ENCODE measurements at regions of chr3 and their contacts with region 1.

Region 1: GRCh38 chr3:47130557-47130956 is 33.4 kb downstream of the SETD2 start:
- DNase-seq: no peak
- H3K4me3 ChIP-seq: no peak overlapping the region
- H3K27ac ChIP-seq: no peak overlapping the region
- H3K4me1 ChIP-seq: peaks cover 5% of the 10 kb centered on the region
- H3K27me3 ChIP-seq: no peaks in the 10 kb centered on the region
- CTCF ChIP-seq: no peak
- POLR2A ChIP-seq: no peak

Region 2: DNA sequence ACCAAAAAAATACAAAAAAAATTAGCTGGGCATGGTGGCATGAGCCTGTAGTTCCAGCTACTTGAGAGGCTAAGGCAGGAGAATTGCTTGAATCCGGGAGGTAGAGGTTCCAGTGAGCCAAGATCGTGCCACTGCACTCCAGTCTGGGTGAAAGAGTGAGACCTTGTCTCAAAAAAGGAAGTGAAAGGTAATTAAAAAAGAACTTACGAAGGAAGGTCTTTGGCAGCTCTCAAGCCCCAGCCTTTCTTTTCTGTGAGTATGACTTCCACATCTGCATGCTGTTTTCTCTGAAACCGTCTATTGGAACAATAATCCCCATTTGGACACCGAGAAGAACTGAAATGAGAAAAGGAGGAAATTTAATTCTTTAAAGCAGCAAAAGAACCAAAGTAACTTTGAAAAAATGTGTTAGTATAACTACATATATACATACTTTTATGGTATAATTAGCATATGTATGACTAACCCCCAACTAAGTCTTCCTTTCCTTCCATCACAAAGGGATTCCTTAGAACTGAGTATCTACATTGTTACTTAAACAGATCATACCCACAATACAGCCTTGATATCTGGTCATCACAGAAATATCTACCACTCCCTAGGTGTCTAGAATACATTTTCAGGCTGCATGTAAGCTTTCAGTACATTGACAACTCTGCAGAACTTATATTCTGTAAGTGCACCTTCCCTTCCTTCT is 16.7 kb before region 1 on chr3:
- CTCF ChIA-PET with region 1: interaction called, 8 read pairs
- POLR2A ChIA-PET with region 1: no interaction called
- dilution Hi-C with region 1: no loop called
- intact Hi-C with region 1: loop called (anchors 2 kb)
- DNase-seq: no peak
- H3K4me3 ChIP-seq: no peak overlapping the region
- H3K27ac ChIP-seq: no peak overlapping the region
- H3K4me1 ChIP-seq: peaks cover 7% of the 10 kb centered on the region
- H3K27me3 ChIP-seq: no peaks in the 10 kb centered on the region
- CTCF ChIP-seq: no peak
- POLR2A ChIP-seq: no peak

Region 3: DNA sequence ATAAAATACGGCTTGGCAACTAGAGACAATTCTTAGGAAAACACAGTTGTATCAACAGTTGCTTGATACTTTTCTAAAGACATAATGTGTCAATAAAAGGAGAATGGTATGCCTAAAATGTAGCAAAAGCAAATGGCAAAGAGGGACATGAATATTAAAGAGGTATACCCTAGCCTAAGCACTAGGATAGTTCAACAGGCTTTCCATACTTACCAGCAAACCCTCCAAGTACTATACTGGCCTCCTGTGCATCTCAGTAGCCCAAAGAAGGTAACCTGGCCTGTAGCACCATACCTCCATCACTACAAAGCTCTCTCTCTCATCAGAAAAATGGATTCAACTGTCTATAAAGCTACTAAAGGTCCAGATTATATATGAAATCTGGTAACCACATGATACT is 25.8 kb after region 1 on chr3:
- CTCF ChIA-PET with region 1: no interaction called
- POLR2A ChIA-PET with region 1: no interaction called
- dilution Hi-C with region 1: no loop called
- intact Hi-C with region 1: no loop called
- DNase-seq: no peak
- H3K4me3 ChIP-seq: no peak overlapping the region
- H3K27ac ChIP-seq: no peak overlapping the region
- H3K4me1 ChIP-seq: peaks cover 4% of the 10 kb centered on the region
- H3K27me3 ChIP-seq: no peaks in the 10 kb centered on the region
- CTCF ChIP-seq: no peak
- POLR2A ChIP-seq: no peak

Measured in endothelial cell of umbilical vein (primary cell).